ENCODE measurements at regions of chr3 and their contacts with region 1.

Region 1: DNA sequence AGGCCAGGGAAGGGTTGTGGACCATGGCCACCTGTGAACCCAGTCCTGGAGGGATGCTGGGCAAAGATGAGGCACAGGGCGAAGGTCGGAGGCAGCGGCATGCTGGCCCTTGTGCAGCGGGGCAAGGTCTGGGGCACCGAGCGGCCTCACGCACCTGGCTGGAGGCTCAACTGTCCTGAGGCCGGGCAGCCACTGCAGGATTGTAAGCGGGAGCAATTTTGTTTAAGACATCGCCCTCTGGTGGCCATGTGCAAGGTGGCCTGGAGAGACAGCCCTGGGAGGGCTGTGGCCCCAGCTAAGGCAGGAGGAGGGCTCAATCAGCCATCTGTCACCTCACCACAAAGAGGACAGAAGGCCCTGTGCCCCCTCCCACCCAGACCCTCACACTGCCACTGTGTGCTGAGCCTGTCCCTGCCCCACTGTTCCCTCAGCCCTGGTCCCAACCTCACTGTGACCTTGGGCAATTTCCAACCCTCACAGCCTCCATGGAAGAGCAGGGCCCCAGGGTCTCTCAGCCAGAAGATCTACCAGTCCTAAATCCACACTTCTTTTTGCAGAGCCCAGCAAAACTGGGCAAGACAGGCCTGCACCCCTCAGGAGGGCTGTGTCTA is 46.2 kb downstream of the TPRA1 start:
- DNase-seq: peak; percentile 43 to 78 (median 54)
- ATAC-seq: peak; percentile 54
- H3K4me3 ChIP-seq: no peak overlapping the region
- H3K4me3 Mint-ChIP-seq: peak overlapping the region; percentile 42
- H3K27ac ChIP-seq: no peak overlapping the region
- H3K27ac Mint-ChIP-seq: no peak overlapping the region
- H3K4me1 ChIP-seq: peaks cover 19% of the 10 kb centered on the region
- H3K4me1 Mint-ChIP-seq: peaks cover 14% of the 10 kb centered on the region
- H3K27me3 ChIP-seq: no peaks in the 10 kb centered on the region
- H3K27me3 Mint-ChIP-seq: no peaks in the 10 kb centered on the region
- CTCF ChIP-seq: peak; percentile 77

Region 2: DNA sequence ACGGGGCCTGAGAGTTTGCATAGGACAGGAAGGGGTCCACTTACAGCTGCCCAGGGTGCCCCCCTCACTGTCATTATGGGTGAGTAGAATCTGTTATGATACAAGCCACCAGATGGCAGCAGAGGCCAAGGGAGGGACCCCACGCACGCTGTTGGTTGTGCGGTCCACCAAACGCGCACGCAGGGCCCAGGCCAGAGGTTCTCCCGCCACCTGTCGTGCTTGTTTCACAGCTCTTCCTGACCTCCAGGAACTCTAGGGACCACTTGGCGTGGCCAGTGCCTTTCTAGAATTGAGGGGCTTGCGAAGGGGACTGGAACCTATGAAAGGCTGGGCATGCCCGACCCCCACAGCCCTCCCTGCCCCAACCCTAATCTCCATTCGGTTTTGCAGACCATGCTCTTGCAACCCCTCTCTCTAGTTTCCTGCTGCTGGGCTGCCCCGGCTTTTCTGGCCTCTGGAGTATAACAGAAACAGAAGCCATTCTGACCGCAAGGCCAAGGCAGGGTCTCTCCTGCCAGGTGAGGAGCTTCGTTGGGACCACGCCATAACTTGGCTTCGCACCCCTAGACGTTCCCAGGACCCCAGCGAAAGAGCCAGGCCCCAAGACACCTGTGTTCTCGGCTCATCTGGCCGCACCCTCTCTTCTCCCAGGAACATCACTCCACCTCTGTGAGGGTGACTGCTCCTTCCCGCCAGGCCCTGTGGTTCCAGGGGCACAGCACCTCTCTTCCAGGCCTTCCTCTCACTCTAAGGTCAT is 1409.9 kb before region 1 on chr3:
- CTCF ChIA-PET with region 1: no interaction called
- POLR2A ChIA-PET with region 1: no interaction called
- intact Hi-C with region 1: loop called (anchors 10 kb)
- DNase-seq: peak; percentile 11 to 61 (median 24)
- ATAC-seq: peak; percentile 62
- H3K4me3 ChIP-seq: no peak overlapping the region
- H3K4me3 Mint-ChIP-seq: no peak overlapping the region
- H3K27ac ChIP-seq: no peak overlapping the region
- H3K27ac Mint-ChIP-seq: no peak overlapping the region
- H3K4me1 ChIP-seq: peaks cover 4% of the 10 kb centered on the region
- H3K4me1 Mint-ChIP-seq: no peaks in the 10 kb centered on the region
- H3K27me3 ChIP-seq: peaks cover 0 to 8% of the 10 kb centered on the region in 2 experiments
- H3K27me3 Mint-ChIP-seq: peaks cover 36% of the 10 kb centered on the region
- CTCF ChIP-seq: peak; percentile 68

Region 3: DNA sequence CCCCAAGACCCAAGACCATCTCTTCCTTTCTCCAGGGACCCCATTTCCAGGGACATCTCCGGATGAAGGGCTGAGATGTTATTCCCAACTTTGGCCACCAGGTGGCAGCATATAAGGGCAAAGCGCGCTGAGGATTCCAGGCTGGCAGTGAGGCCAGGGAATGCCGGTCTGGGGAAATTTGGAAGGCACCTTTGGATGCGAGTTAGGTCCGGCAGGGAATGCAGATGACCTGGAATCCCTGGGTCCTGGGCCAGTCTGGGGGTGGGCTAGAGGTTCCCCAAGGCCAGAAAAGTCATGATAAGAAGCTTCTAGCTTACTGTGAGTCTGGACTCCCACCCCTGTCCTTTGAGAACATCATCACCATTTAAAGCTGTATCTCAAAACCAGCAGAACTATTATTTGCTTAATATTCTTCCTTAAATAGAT is 1021.9 kb before region 1 on chr3:
- CTCF ChIA-PET with region 1: interaction called, 3 read pairs
- POLR2A ChIA-PET with region 1: no interaction called
- intact Hi-C with region 1: loop called (anchors 1 to 5 kb)
- DNase-seq: peak; percentile 12 to 60 (median 26)
- ATAC-seq: no peak
- H3K4me3 ChIP-seq: no peak overlapping the region
- H3K4me3 Mint-ChIP-seq: no peak overlapping the region
- H3K27ac ChIP-seq: no peak overlapping the region
- H3K27ac Mint-ChIP-seq: no peak overlapping the region
- H3K4me1 ChIP-seq: peaks cover 5% of the 10 kb centered on the region
- H3K4me1 Mint-ChIP-seq: no peaks in the 10 kb centered on the region
- H3K27me3 ChIP-seq: peaks cover 12 to 17% of the 10 kb centered on the region in 2 experiments
- H3K27me3 Mint-ChIP-seq: peaks cover 19% of the 10 kb centered on the region
- CTCF ChIP-seq: peak; percentile 91

Region 4: GRCh38 chr3:126679318-126679751 is 865.0 kb before region 1 on chr3:
- CTCF ChIA-PET with region 1: interaction called, 4 read pairs
- POLR2A ChIA-PET with region 1: no interaction called
- intact Hi-C with region 1: loop called (anchors 1 to 2 kb)
- DNase-seq: peak; percentile 52 to 84 (median 74)
- ATAC-seq: peak; percentile 81
- H3K4me3 ChIP-seq: no peak overlapping the region
- H3K4me3 Mint-ChIP-seq: no peak overlapping the region
- H3K27ac ChIP-seq: no peak overlapping the region
- H3K27ac Mint-ChIP-seq: no peak overlapping the region
- H3K4me1 ChIP-seq: peaks cover 7% of the 10 kb centered on the region
- H3K4me1 Mint-ChIP-seq: peaks cover 6% of the 10 kb centered on the region
- H3K27me3 ChIP-seq: peaks cover 2 to 11% of the 10 kb centered on the region in 2 experiments
- H3K27me3 Mint-ChIP-seq: peaks cover 20% of the 10 kb centered on the region
- CTCF ChIP-seq: peak; percentile 97

Region 5: GRCh38 chr3:126752303-126752842 is 791.9 kb before region 1 on chr3:
- CTCF ChIA-PET with region 1: interaction called, 3 read pairs
- POLR2A ChIA-PET with region 1: no interaction called
- intact Hi-C with region 1: loop called in 1 of 2 experiments (anchors 2 kb)
- DNase-seq: peak in 13 of 14 experiments; percentile 6 to 59 (median 26)
- ATAC-seq: no peak
- H3K4me3 ChIP-seq: no peak overlapping the region
- H3K4me3 Mint-ChIP-seq: no peak overlapping the region
- H3K27ac ChIP-seq: no peak overlapping the region
- H3K27ac Mint-ChIP-seq: no peak overlapping the region
- H3K4me1 ChIP-seq: no peaks in the 10 kb centered on the region
- H3K4me1 Mint-ChIP-seq: peaks cover 8% of the 10 kb centered on the region
- H3K27me3 ChIP-seq: no peaks in the 10 kb centered on the region
- H3K27me3 Mint-ChIP-seq: no peaks in the 10 kb centered on the region
- CTCF ChIP-seq: peak; percentile 35

Region 6: GRCh38 chr3:126982471-126983175 is 561.7 kb before region 1 on chr3 and contains the start of gene PLXNA1:
- CTCF ChIA-PET with region 1: no interaction called
- POLR2A ChIA-PET with region 1: no interaction called
- intact Hi-C with region 1: loop called in 1 of 2 experiments (anchors 2 kb)
- DNase-seq: peak; percentile 76 to 95 (median 85)
- ATAC-seq: peak; percentile 82
- H3K4me3 ChIP-seq: peak within 1 kb of the TSS; percentile 67
- H3K4me3 Mint-ChIP-seq: peak within 1 kb of the TSS; percentile 89
- H3K27ac ChIP-seq: peak within 1 kb of the TSS; percentile 88 to 90
- H3K27ac Mint-ChIP-seq: peak within 1 kb of the TSS; percentile 93
- H3K4me1 ChIP-seq: peaks cover 30% of the 10 kb centered on the region
- H3K4me1 Mint-ChIP-seq: peaks cover 15% of the 10 kb centered on the region
- H3K27me3 ChIP-seq: peaks cover 0 to 5% of the 10 kb centered on the region in 2 experiments
- H3K27me3 Mint-ChIP-seq: peaks cover 10% of the 10 kb centered on the region
- CTCF ChIP-seq: peak; percentile 99
- total RNA-seq, gene PLXNA1: 9.8 to 10.6 TPM

Measured in CD4-positive, alpha-beta T cell (primary cell).